MCF 10A (cell line): ENCODE measurements at regions of chr20 and their contacts with region 1.

Region 1: DNA sequence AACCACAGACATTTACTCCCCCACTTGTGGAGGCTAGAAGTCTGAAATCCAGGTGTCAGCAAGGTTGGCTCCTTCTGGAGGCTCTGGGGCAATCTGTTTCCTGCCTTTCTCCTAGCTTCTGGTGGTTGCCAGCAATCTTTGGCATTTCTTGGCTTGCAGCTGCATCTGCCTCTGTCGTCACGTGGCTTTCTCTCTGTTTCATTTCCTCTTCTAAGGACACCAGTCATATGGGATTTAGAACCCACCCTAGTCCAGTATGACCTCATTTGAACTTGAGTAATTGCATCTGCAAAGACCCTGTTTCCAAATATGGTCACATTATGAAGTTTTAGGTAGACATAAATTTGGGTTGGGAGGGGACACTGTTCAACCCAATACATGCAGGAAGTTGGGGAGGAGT is 56.2 kb upstream of the EPB41L1 start:
- DNase-seq: peak; percentile 82
- H3K4me3 Mint-ChIP-seq: no peak overlapping the region
- H3K27ac Mint-ChIP-seq: peak overlapping the region; percentile 63
- H3K4me1 Mint-ChIP-seq: peaks cover 40% of the 10 kb centered on the region
- H3K27me3 Mint-ChIP-seq: no peaks in the 10 kb centered on the region
- CTCF ChIP-seq: no peak

Region 2: DNA sequence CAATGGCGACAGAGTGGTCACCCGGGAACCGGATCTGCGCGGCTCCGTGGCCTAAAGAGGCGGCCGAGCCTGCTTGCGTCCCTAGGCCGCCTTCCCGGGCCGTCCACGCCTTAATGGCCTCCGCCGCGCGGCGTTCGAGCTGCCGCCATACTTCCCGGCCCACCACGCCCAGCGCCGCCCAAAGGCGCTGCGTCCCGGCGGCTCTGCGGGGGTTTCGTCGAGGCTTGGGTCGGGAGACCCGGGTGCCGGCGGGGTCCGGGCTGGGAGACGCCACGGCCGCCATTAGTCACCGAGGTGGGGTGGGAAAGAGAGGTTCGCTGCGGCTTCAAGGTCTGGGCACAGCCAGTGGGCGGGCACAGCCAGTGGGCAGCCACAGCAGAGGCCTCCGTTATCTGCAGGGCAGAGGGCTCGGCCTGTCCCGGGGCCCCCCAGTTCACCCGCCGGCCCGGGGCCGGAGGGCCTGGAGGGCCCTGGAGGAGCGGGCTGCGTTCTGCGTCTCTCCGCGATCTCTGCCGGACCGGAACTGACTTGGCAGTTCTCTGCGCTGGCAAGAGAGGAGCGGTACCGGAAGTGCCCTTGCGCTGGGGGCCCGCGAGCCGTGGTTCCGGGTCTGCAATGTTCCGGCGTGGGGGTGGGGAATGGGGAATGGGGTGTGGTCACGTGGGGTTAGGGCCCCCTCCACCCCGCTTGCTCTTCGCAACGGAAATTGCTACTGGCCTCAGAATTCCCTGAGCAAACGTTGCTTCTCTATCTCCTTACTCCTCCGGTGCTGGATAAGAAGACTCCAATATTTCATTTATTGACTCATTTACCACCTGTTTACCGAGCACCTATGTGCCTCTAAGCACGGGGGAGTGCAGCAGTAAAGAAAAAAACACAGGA is 47.7 kb before region 1 on chr20:
- CTCF ChIA-PET with region 1: interaction called, 5 read pairs
- POLR2A ChIA-PET with region 1: interaction called, 22 read pairs
- intact Hi-C with region 1: no loop called
- DNase-seq: peak; percentile 82
- H3K4me3 Mint-ChIP-seq: peak overlapping the region; percentile 84
- H3K27ac Mint-ChIP-seq: peak overlapping the region; percentile 93
- H3K4me1 Mint-ChIP-seq: peaks cover 24% of the 10 kb centered on the region
- H3K27me3 Mint-ChIP-seq: no peaks in the 10 kb centered on the region
- CTCF ChIP-seq: no peak

Region 3: DNA sequence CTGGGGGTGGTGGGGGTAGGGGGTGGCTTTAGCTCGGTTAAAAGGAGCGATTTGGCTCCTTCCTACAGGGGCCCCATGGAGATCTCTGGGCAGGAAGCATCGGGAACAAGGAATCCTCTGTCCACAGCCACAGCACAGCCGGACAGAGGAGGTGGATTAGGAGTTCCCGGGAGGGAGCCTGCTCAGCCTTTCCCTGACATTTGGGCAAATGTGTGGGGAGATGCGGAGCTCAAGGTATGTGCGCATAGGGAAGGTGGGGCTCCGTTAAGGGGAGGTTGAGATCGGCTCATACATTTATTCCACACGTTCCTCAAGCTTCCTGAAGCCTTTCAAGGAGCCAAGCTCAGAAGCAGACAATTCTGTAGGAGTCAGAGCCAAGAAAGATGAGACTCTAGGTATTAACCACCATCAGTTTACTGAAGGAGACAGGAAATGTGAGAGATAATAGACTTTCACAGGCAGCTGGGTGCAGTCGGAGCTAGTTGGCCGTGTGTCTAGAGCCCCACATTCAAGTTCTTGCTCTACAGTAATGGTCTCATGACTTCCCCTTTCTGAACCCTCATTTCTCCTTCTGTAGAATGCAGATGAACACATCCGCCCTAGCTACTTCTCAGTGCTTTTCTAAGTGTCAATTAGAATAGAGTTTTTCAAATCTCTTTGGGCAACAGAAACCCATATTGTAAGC is 15.3 kb after region 1 on chr20:
- CTCF ChIA-PET with region 1: interaction called, 3 read pairs
- POLR2A ChIA-PET with region 1: interaction called, 11 read pairs
- intact Hi-C with region 1: no loop called
- DNase-seq: no peak
- H3K4me3 Mint-ChIP-seq: no peak overlapping the region
- H3K27ac Mint-ChIP-seq: no peak overlapping the region
- H3K4me1 Mint-ChIP-seq: peaks cover 6% of the 10 kb centered on the region
- H3K27me3 Mint-ChIP-seq: no peaks in the 10 kb centered on the region
- CTCF ChIP-seq: no peak

Region 4: GRCh38 chr20:36135159-36135558 is 36.8 kb after region 1 on chr20:
- CTCF ChIA-PET with region 1: interaction called, 7 read pairs
- POLR2A ChIA-PET with region 1: interaction called, 5 read pairs
- intact Hi-C with region 1: loop called (anchors 5 kb)
- DNase-seq: no peak
- H3K4me3 Mint-ChIP-seq: no peak overlapping the region
- H3K27ac Mint-ChIP-seq: no peak overlapping the region
- H3K4me1 Mint-ChIP-seq: peaks cover 4% of the 10 kb centered on the region
- H3K27me3 Mint-ChIP-seq: no peaks in the 10 kb centered on the region
- CTCF ChIP-seq: no peak

Region 5: GRCh38 chr20:37095599-37096414 is 997.4 kb after region 1 on chr20 and contains the start of gene RBL1:
- CTCF ChIA-PET with region 1: no interaction called
- POLR2A ChIA-PET with region 1: no interaction called
- intact Hi-C with region 1: no loop called
- DNase-seq: peak; percentile 83
- H3K4me3 Mint-ChIP-seq: peak within 1 kb of the TSS; percentile 89
- H3K27ac Mint-ChIP-seq: peak within 1 kb of the TSS; percentile 87
- H3K4me1 Mint-ChIP-seq: peaks cover 16% of the 10 kb centered on the region
- H3K27me3 Mint-ChIP-seq: no peaks in the 10 kb centered on the region
- CTCF ChIP-seq: no peak
- total RNA-seq, gene RBL1: 8.8 and 9.2 TPM in 2 replicates